Calu3 (cell line): ENCODE measurements at regions of chr6 and their contacts with region 1.

Region 1: GRCh38 chr6:36340618-36341454 is 4.1 kb upstream of the BNIP5 start:
- DNase-seq: peak; percentile 84
- H3K4me3 Mint-ChIP-seq: peak overlapping the region; percentile 58
- H3K27ac Mint-ChIP-seq: no peak overlapping the region
- H3K4me1 Mint-ChIP-seq: peaks cover 21% of the 10 kb centered on the region
- H3K27me3 Mint-ChIP-seq: no peaks in the 10 kb centered on the region
- CTCF ChIP-seq: peak; percentile 98

Region 2: GRCh38 chr6:36350681-36351571 is 10.1 kb after region 1 on chr6:
- CTCF ChIA-PET with region 1: interaction called, 12 read pairs
- intact Hi-C with region 1: no loop called
- DNase-seq: peak; percentile 34
- H3K4me3 Mint-ChIP-seq: no peak overlapping the region
- H3K27ac Mint-ChIP-seq: peak overlapping the region; percentile 53
- H3K4me1 Mint-ChIP-seq: peaks cover 24% of the 10 kb centered on the region
- H3K27me3 Mint-ChIP-seq: no peaks in the 10 kb centered on the region
- CTCF ChIP-seq: no peak

Region 3: GRCh38 chr6:36360241-36361054 is 19.6 kb after region 1 on chr6:
- CTCF ChIA-PET with region 1: interaction called, 20 read pairs
- intact Hi-C with region 1: no loop called
- DNase-seq: peak; percentile 85
- H3K4me3 Mint-ChIP-seq: no peak overlapping the region
- H3K27ac Mint-ChIP-seq: no peak overlapping the region
- H3K4me1 Mint-ChIP-seq: peaks cover 47% of the 10 kb centered on the region
- H3K27me3 Mint-ChIP-seq: no peaks in the 10 kb centered on the region
- CTCF ChIP-seq: peak; percentile 82

Region 4: GRCh38 chr6:36386495-36387439 is 45.9 kb after region 1 on chr6:
- CTCF ChIA-PET with region 1: interaction called, 9 read pairs
- intact Hi-C with region 1: loop called (anchors 2 kb)
- DNase-seq: peak; percentile 37
- H3K4me3 Mint-ChIP-seq: peak overlapping the region; percentile 79
- H3K27ac Mint-ChIP-seq: peak overlapping the region; percentile 55
- H3K4me1 Mint-ChIP-seq: no peaks in the 10 kb centered on the region
- H3K27me3 Mint-ChIP-seq: peaks cover 15% of the 10 kb centered on the region
- CTCF ChIP-seq: no peak